Dorsolateral prefrontal cortex (tissue), 120 donors: ENCODE measurements at regions of chr15 and their contacts with region 1.

Region 1: GRCh38 chr15:63752075-63752684 is 81.6 kb downstream of the HERC1 start:
- DNase-seq: peak in 1 of 10 donors; percentile 23
- H3K4me3 ChIP-seq: no peak overlapping the region
- H3K27ac ChIP-seq: peak overlapping the region in 4 of 59 donors; percentile 2 to 56 (median 35)
- H3K27me3 ChIP-seq: no peaks in the 10 kb centered on the region
- CTCF ChIP-seq: peak; percentile 37 to 95 (median 77)

Region 2: DNA sequence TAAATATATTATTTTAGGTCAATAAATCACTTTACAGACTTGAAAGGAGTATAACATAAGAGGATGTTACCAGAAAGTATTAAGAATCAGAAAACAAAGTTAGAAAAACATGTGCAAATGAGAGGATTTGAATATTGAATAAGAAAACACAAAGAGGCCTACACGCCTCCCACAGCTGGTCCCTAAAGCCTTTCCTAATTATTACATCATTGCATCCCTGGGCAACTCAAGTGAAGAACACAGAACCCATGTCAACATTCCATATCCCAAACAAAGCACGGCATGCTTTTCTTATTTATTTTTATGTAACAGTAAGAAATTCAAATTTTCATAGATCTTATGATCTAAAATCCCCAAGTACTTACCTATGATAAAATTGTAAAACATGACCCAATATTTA is 20.3 kb after region 1 on chr15:
- intact Hi-C with region 1: no loop called
- DNase-seq: no peak
- H3K4me3 ChIP-seq: no peak overlapping the region
- H3K27ac ChIP-seq: no peak overlapping the region
- H3K27me3 ChIP-seq: no peaks in the 10 kb centered on the region
- CTCF ChIP-seq: no peak

Region 3: DNA sequence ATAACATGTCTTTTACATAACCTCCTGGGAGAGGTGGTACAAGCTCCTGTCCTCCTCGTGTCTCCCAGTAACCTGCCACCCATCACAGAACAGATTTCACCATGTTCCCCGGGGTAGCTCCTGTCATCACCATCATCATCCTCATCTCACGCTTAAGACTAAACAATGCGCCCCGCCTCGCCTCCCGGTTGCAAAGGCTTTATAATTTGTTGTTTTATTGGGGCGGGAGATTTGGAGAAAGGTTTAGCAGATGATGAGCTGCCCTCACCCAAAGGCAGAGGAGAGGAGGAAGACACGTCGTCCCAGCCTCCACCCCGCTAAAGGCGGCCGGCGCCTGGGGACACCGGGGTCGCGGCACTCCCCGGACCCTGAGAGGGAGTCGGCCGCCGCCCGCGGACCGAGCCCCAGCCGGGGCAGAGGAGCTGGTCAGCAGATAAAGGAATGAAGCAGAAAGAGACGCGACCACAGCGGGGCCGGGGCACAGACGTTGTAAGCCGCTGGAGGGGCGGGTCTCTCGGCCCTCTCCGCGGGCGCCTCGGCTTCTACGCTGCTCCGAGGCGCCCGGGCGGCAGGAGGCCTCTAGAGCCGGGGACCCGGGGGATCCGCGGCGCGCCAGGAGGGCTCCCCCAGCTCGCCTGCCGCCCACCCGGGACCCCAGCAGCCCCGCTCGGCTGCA is 81.0 kb after region 1 on chr15:
- intact Hi-C with region 1: loop called in 1 of 2 experiments (anchors 10 kb)
- DNase-seq: peak in 5 of 10 donors; percentile 3 to 61 (median 32)
- H3K4me3 ChIP-seq: peak overlapping the region; percentile 54 to 98 (median 90)
- H3K27ac ChIP-seq: peak overlapping the region; percentile 28 to 97 (median 92)
- H3K27me3 ChIP-seq: no peaks in the 10 kb centered on the region
- CTCF ChIP-seq: no peak

Region 4: GRCh38 chr15:64067564-64068030 is 315.4 kb after region 1 on chr15:
- intact Hi-C with region 1: loop called (anchors 2 to 5 kb)
- DNase-seq: peak in 6 of 10 donors; percentile 59 to 75 (median 65)
- H3K4me3 ChIP-seq: peak overlapping the region in 2 of 59 donors; percentile 16 to 27
- H3K27ac ChIP-seq: no peak overlapping the region
- H3K27me3 ChIP-seq: no peaks in the 10 kb centered on the region
- CTCF ChIP-seq: peak; percentile 69 to 96 (median 89)

Region 5: DNA sequence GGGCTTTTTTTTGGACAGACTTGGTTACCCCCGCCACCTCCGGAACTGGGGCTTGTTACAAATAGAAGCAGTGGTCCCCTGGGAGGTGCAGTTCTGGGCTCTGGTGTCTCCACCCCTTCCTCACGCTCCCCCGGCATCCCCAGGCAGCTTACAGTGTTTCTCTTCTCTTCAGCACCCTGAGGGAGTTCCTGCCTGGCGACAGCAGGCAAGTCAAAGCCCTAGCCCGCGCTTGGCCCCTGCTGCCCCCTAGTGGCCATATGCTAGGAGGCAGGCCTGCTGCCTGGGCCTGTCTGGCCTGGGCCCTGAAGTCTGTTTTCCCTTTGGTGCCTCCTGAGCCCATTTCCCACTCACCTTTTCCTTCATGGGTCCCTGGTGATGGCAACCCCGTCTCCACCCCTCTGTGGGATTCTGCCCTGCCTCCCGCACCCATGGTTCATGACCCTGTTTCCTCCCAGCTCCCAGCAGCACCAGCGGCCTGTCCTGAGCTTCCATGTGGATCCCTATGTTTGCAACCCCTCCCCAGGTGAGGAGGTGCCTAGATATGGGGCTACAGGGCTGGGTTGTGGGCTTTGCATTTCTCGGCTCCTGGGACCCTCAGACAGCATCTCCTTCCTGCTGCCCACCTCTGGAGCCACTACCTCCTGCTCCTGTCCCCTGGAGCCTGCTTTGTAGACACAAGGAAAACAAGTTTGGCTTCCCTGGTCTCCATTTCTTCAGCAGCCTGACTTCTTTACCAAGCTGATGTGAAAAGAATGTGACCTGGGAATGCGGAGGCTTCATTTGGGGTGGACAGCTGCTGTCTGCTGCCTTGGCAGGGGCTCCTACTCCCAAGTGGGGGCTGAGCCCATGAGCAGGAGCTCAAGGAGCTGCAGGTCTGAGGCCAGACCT is 401.5 kb after region 1 on chr15:
- intact Hi-C with region 1: loop called in 1 of 2 experiments (anchors 10 kb)
- DNase-seq: peak; percentile 91 to 95 (median 92)
- H3K4me3 ChIP-seq: peak overlapping the region in 56 of 59 donors; percentile 5 to 86 (median 70)
- H3K27ac ChIP-seq: peak overlapping the region in 57 of 59 donors; percentile 1 to 96 (median 80)
- H3K27me3 ChIP-seq: peaks cover 0 to 19% (median 5%) of the 10 kb centered on the region in 45 donors
- CTCF ChIP-seq: peak; percentile 80 to 99 (median 97)